B cell (primary cell): ENCODE measurements at regions of chr17 and their contacts with region 1.

Region 1: DNA sequence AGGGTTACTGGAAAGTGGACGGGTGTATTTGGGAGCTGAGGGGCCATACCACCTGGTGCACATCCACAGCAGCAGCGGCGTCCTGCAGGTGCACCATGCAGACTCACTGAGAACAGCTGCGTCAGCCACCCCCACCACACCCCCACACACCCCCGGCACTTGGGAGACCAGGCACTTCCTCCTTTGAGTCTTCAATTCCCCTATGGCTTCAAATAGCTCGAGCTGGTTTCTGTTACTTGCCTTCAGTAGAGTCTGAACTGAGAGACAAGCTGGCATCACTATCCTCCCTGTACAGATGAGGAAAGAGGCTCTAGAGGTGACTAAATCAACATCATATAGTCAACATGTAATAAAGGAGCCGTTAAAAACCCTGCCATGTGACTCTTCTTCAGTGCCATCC is 15.4 kb downstream of the CUEDC1 start:
- DNase-seq: peak; percentile 91
- ATAC-seq: peak; percentile 94
- H3K4me3 ChIP-seq: peak overlapping the region in 1 of 5 experiments; percentile 15
- H3K4me3 Mint-ChIP-seq: peak overlapping the region; percentile 67
- H3K27ac ChIP-seq: no peak overlapping the region
- H3K27ac Mint-ChIP-seq: peak overlapping the region; percentile 63
- H3K4me1 ChIP-seq: peaks cover 26 to 33% of the 10 kb centered on the region in 2 donors
- H3K4me1 Mint-ChIP-seq: peaks cover 32% of the 10 kb centered on the region
- H3K27me3 ChIP-seq: peaks cover 0 to 71% (median 36%) of the 10 kb centered on the region in 4 experiments
- H3K27me3 Mint-ChIP-seq: peaks cover 49% of the 10 kb centered on the region
- CTCF ChIP-seq: no peak

Region 2: DNA sequence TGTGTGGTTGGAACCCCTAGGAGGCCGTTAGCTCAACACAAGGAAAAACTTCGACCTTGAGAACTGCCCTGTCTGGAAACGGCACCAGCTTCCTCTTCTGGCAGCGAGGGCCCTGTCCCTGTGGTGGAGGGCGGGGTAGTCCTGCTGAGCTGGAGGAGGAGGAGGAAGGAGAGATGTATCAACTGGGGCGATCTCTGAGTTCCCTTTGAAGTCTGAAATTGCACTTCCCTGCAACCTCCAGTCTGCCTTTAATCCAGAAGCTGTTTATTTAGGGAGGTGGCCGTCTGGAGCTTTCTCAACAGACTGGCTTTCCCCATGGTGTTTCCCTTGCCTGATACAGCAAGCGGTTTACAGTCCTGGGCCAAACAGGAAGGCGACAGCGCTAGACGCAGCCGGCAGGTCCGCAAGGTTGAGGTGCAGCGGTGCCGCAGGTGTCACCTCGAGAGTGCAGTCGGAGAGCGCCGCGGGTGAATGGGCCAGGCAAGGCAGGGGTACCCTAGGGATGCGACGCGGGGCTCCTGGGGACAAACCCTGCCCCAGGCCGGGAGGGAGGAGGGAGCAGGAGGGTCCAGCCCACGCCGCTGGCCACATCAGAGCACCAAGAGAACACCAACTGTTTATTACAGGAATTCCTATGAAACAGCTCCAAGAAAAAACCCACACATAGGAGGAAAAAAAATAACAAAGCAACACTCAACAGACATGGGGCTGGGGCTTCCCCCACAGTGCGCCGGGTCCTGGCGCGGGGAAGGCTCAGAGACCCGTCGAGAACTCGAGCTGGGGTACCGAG is 78.6 kb before region 1 on chr17:
- CTCF ChIA-PET with region 1: interaction called, 17 read pairs
- POLR2A ChIA-PET with region 1: no interaction called
- intact Hi-C with region 1: no loop called
- DNase-seq: peak; percentile 62
- ATAC-seq: peak; percentile 60
- H3K4me3 ChIP-seq: peak overlapping the region; percentile 3 to 59 (median 39)
- H3K4me3 Mint-ChIP-seq: peak overlapping the region; percentile 90
- H3K27ac ChIP-seq: no peak overlapping the region
- H3K27ac Mint-ChIP-seq: peak overlapping the region; percentile 11
- H3K4me1 ChIP-seq: peaks cover 17 to 20% of the 10 kb centered on the region in 2 donors
- H3K4me1 Mint-ChIP-seq: peaks cover 16% of the 10 kb centered on the region
- H3K27me3 ChIP-seq: peaks cover 0 to 51% (median 19%) of the 10 kb centered on the region in 4 experiments
- H3K27me3 Mint-ChIP-seq: peaks cover 23% of the 10 kb centered on the region
- CTCF ChIP-seq: no peak

Region 3: GRCh38 chr17:57955183-57955931 is 15.6 kb after region 1 on chr17 and contains the start of gene CUEDC1:
- CTCF ChIA-PET with region 1: interaction called, 10 read pairs
- POLR2A ChIA-PET with region 1: interaction called, 9 read pairs
- intact Hi-C with region 1: loop called (anchors 1 kb)
- DNase-seq: peak; percentile 71
- ATAC-seq: peak; percentile 79
- H3K4me3 ChIP-seq: peak within 1 kb of the TSS in 3 of 5 experiments; percentile 33 to 46 (median 40)
- H3K4me3 Mint-ChIP-seq: peak within 1 kb of the TSS; percentile 79
- H3K27ac ChIP-seq: no peak within 1 kb of the TSS
- H3K27ac Mint-ChIP-seq: peak within 1 kb of the TSS; percentile 56
- H3K4me1 ChIP-seq: peaks cover 29 to 30% of the 10 kb centered on the region in 2 donors
- H3K4me1 Mint-ChIP-seq: peaks cover 32% of the 10 kb centered on the region
- H3K27me3 ChIP-seq: peaks cover 0 to 72% (median 38%) of the 10 kb centered on the region in 4 experiments
- H3K27me3 Mint-ChIP-seq: peaks cover 64% of the 10 kb centered on the region
- CTCF ChIP-seq: peak; percentile 43
- total RNA-seq, gene CUEDC1: not detected in 2 replicates

Region 4: GRCh38 chr17:57987580-57988421 is 48.0 kb after region 1 on chr17 and contains the start of gene VEZF1:
- CTCF ChIA-PET with region 1: no interaction called
- POLR2A ChIA-PET with region 1: interaction called, 8 read pairs
- intact Hi-C with region 1: loop called (anchors 2 kb)
- DNase-seq: peak; percentile 89
- ATAC-seq: peak; percentile 70
- H3K4me3 ChIP-seq: peak within 1 kb of the TSS; percentile 50 to 89 (median 82)
- H3K4me3 Mint-ChIP-seq: peak within 1 kb of the TSS; percentile 95
- H3K27ac ChIP-seq: peak within 1 kb of the TSS; percentile 66 to 82
- H3K27ac Mint-ChIP-seq: peak within 1 kb of the TSS; percentile 97
- H3K4me1 ChIP-seq: peaks cover 36 to 41% of the 10 kb centered on the region in 2 donors
- H3K4me1 Mint-ChIP-seq: peaks cover 58% of the 10 kb centered on the region
- H3K27me3 ChIP-seq: no peaks in the 10 kb centered on the region
- H3K27me3 Mint-ChIP-seq: no peaks in the 10 kb centered on the region
- CTCF ChIP-seq: no peak
- total RNA-seq, gene VEZF1: 63.9 and 75.9 TPM in 2 replicates